CD4-positive, alpha-beta T cell (primary cell): ENCODE measurements at regions of chr11 and their contacts with region 1.

Region 1: DNA sequence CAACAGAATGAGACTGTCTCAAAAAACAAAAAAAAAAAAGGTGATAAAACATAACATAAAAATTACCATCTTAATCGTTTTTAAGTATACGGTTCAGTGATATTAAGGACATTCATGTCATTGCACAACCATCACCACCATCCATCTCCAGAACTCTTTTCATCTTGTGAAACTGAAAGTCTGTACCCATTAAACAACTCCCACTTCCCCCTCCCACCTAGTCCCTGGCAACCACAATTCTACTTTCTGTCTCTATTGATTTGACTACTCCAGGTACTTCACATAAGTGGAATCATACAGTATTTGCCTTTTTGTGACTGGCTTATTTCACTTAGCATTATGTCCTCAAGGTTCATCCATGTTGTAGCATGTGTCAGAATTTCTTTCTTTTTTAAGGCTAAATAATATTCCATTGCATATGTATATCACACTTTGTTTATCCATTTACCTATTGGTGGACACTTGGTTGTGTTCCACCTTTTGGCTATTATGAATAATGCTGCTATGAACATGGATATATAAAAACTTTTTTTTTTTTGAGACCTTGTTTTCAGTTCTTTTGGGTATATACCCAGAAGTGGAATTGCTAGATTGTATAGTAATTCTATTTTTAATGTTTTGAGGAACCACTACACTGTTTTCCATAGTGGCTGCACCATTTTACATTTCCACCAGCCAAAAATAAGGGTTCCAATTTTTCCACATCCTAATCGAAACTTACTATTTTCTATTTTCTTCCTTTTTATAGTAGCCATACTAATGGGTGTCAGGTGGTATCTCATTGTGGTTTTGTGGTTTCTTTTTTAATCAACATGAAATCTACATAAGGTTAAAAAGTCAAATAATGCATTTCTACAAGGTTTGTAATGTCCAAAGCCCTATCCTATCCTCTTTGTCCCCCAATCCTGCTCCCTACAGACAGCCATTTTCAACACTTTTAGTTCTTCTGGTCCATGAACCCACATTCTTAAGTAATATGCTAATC is 23.4 kb upstream of the PIK3C2A start:
- DNase-seq: peak in 3 of 14 experiments; percentile 50 to 57 (median 54)
- ATAC-seq: peak; percentile 68
- H3K4me3 ChIP-seq: no peak overlapping the region
- H3K4me3 Mint-ChIP-seq: no peak overlapping the region
- H3K27ac ChIP-seq: no peak overlapping the region
- H3K27ac Mint-ChIP-seq: no peak overlapping the region
- H3K4me1 ChIP-seq: peaks cover 9% of the 10 kb centered on the region
- H3K4me1 Mint-ChIP-seq: peaks cover 16% of the 10 kb centered on the region
- H3K27me3 ChIP-seq: no peaks in the 10 kb centered on the region
- H3K27me3 Mint-ChIP-seq: no peaks in the 10 kb centered on the region
- CTCF ChIP-seq: no peak

Region 2: GRCh38 chr11:16505481-16505880 is 725.7 kb before region 1 on chr11:
- CTCF ChIA-PET with region 1: no interaction called
- POLR2A ChIA-PET with region 1: no interaction called
- intact Hi-C with region 1: no loop called
- DNase-seq: no peak
- ATAC-seq: no peak
- H3K4me3 ChIP-seq: no peak overlapping the region
- H3K4me3 Mint-ChIP-seq: no peak overlapping the region
- H3K27ac ChIP-seq: no peak overlapping the region
- H3K27ac Mint-ChIP-seq: no peak overlapping the region
- H3K4me1 ChIP-seq: no peaks in the 10 kb centered on the region
- H3K4me1 Mint-ChIP-seq: no peaks in the 10 kb centered on the region
- H3K27me3 ChIP-seq: no peaks in the 10 kb centered on the region
- H3K27me3 Mint-ChIP-seq: no peaks in the 10 kb centered on the region
- CTCF ChIP-seq: no peak

Region 3: DNA sequence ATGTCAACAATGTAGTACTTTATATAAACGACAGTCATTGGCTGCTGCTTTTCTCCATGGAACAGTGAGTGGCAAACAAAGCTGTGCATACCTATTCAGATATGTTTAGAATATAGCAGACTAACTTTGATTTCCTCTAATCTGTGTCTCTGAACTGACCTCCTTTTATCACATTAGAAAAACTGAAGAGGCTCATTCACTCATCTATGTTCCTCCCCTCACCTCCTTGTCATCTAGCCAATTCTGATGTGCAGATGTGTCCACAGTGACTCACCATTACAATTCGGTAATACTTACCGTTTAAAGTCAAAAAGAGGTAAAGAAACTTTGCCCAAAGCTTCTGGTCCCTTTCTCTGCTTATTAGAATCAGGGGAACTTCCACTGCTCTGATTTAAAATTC is 102.2 kb before region 1 on chr11:
- CTCF ChIA-PET with region 1: no interaction called
- POLR2A ChIA-PET with region 1: no interaction called
- intact Hi-C with region 1: no loop called
- DNase-seq: no peak
- ATAC-seq: no peak
- H3K4me3 ChIP-seq: no peak overlapping the region
- H3K4me3 Mint-ChIP-seq: no peak overlapping the region
- H3K27ac ChIP-seq: no peak overlapping the region
- H3K27ac Mint-ChIP-seq: no peak overlapping the region
- H3K4me1 ChIP-seq: no peaks in the 10 kb centered on the region
- H3K4me1 Mint-ChIP-seq: no peaks in the 10 kb centered on the region
- H3K27me3 ChIP-seq: no peaks in the 10 kb centered on the region
- H3K27me3 Mint-ChIP-seq: no peaks in the 10 kb centered on the region
- CTCF ChIP-seq: no peak

Region 4: GRCh38 chr11:17354601-17354991 is 123.4 kb after region 1 on chr11:
- CTCF ChIA-PET with region 1: no interaction called
- POLR2A ChIA-PET with region 1: interaction called, 3 read pairs
- intact Hi-C with region 1: loop called (anchors 5 to 10 kb)
- DNase-seq: peak; percentile 13 to 81 (median 38)
- ATAC-seq: peak; percentile 15
- H3K4me3 ChIP-seq: no peak overlapping the region
- H3K4me3 Mint-ChIP-seq: peak overlapping the region; percentile 93
- H3K27ac ChIP-seq: no peak overlapping the region
- H3K27ac Mint-ChIP-seq: peak overlapping the region; percentile 72
- H3K4me1 ChIP-seq: peaks cover 21% of the 10 kb centered on the region
- H3K4me1 Mint-ChIP-seq: peaks cover 35% of the 10 kb centered on the region
- H3K27me3 ChIP-seq: no peaks in the 10 kb centered on the region
- H3K27me3 Mint-ChIP-seq: no peaks in the 10 kb centered on the region
- CTCF ChIP-seq: peak; percentile 82